Activated CD4-positive, alpha-beta T cell treated with anti-CD3 and anti-CD28 coated beads for 36 hours (primary cell): ENCODE measurements at regions of chr10 and their contacts with region 1.

Region 1: DNA sequence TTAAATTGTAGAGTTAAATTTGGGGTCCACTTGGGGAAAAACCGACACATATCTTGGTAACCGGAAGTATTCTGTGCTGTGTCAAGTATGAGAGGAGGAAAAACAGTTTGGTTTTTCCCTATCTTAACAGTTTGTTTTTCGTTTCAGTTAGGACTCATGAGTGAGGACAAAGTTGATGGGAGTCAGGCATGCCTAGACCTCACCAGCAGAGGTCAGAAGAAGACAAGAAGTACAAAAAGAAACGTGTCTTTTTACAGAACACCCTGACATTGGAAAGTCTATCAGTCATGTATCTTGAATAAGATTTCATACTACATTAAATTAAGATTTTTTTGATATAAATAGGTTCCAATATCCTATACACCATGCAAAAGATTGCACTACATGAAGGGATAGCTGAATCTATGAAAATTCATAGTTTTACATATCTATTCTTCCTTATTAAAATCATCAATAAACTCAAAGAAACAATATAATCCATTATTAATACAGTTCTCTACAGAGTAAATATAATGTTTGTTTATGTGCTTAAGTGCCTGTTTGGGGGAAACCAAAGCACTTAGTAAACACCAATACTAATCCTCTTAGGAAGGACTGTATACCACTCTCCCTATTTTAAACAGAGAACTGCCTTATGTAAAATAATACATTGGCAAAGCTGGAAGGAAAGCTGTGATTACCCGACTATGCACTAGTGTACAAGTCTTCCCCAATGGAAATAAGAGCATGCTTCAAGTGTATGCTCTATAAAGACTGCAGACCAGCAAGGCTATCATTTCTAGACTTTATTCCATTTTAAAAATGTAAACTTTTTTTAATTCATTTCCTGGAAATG is 95.6 kb downstream of the USP6NL start:
- DNase-seq: peak; percentile 65
- ATAC-seq: peak; percentile 76
- H3K4me3 Mint-ChIP-seq: no peak overlapping the region
- H3K27ac Mint-ChIP-seq: no peak overlapping the region
- H3K4me1 Mint-ChIP-seq: peaks cover 21% of the 10 kb centered on the region
- H3K27me3 Mint-ChIP-seq: peaks cover 7% of the 10 kb centered on the region

Region 2: GRCh38 chr10:11551916-11552602 is 36.2 kb after region 1 on chr10:
- CTCF ChIA-PET with region 1: interaction called, 5 read pairs
- POLR2A ChIA-PET with region 1: no interaction called
- intact Hi-C with region 1: loop called (anchors 1 to 2 kb)
- DNase-seq: no peak
- ATAC-seq: peak; percentile 90
- H3K4me3 Mint-ChIP-seq: no peak overlapping the region
- H3K27ac Mint-ChIP-seq: peak overlapping the region; percentile 72
- H3K4me1 Mint-ChIP-seq: peaks cover 38% of the 10 kb centered on the region
- H3K27me3 Mint-ChIP-seq: no peaks in the 10 kb centered on the region

Region 3: GRCh38 chr10:11611248-11612020 is 95.6 kb after region 1 on chr10 and contains the start of gene USP6NL:
- CTCF ChIA-PET with region 1: interaction called, 5 read pairs
- POLR2A ChIA-PET with region 1: no interaction called
- intact Hi-C with region 1: loop called (anchors 2 kb)
- DNase-seq: peak; percentile 71
- ATAC-seq: peak; percentile 42
- H3K4me3 Mint-ChIP-seq: peak within 1 kb of the TSS; percentile 83
- H3K27ac Mint-ChIP-seq: peak within 1 kb of the TSS; percentile 81
- H3K4me1 Mint-ChIP-seq: peaks cover 43% of the 10 kb centered on the region
- H3K27me3 Mint-ChIP-seq: peaks cover 2% of the 10 kb centered on the region
- total RNA-seq, gene USP6NL: 4.4 to 5.4 TPM

Region 4: DNA sequence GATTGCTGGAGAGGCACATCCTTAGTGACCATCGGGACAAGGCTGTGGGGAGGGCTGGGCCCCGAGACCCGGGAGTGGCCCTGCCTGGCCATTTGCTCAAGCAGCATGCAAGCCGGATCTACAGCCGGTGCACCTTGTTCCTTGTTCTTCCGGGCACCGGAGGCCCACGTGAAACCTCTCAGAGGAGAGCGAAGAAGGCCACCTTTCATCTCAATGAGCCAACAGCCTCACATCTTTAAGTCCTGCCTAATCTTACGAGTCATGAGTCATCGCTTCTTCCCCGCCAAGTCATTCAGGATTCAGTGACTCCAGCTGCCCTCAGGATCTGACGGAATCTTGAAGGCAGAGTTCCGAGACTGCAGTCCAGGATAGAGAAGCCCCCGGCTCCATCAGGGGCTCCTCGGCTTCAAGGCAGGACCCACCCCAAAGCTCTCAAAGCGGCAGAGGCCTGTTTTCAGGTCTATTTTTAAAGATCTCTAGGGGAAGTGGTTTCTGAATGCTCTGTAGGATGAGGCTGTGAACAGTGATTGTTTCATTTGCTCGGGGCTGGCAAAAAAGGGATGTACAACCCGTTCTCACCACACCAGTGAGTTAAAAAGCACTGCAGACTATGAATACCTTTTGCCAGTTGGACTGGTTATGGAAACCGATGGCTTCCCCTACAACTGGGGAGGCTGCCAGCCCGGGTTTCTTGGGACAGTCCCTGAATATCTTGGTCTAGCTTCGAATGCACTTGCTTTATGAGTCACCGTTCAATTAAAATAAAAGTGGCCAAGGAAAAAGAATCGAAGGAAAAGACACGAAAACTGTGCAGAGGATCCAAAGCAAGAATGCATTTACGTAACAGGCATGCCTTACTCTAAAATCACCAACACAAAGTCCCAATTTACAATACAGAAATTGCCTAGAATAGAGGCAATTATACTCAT is 169.2 kb after region 1 on chr10:
- CTCF ChIA-PET with region 1: no interaction called
- POLR2A ChIA-PET with region 1: no interaction called
- intact Hi-C with region 1: loop called in 1 of 2 experiments (anchors 1 kb)
- DNase-seq: peak; percentile 81
- ATAC-seq: peak; percentile 93
- H3K4me3 Mint-ChIP-seq: peak overlapping the region; percentile 72
- H3K27ac Mint-ChIP-seq: peak overlapping the region; percentile 94
- H3K4me1 Mint-ChIP-seq: peaks cover 49% of the 10 kb centered on the region
- H3K27me3 Mint-ChIP-seq: peaks cover 4% of the 10 kb centered on the region

Region 5: DNA sequence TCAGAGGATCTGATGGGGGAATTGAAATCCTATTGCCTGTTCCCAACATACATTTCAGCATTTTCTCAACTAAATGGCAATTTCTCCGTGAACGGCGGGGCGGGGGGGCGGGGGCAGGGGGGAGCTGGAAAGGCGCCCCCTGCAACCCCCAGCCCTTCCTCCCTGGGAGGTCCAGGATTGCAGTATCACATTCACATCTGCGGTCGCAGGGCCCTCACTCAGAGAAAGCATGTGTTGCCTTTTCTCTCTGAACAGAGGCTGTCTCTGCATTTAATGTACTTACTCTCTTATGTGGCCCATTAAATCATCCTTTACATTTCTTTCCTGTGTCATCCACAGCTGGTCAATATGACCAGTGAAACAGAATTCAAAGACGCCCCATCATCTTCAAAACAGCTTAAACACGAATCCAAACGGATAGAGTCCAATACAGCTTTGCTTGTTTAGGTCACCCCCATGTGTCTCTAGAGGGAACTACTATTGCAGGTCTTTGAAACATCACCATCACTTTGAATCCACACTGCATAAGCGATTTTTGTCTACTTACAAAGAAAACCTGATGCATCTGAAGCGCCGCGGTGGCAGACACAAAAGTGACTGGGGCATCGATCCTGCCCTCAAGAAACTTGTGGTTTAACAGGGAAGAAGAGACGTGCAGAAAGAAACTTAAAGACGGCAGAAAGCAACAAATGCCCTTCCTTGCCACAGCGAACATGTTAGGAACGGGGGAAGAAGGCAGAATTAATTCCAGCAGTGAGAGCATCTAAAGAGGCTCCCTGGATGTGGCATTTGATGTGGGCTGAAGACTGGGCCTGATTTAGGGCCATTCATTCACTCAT is 209.3 kb after region 1 on chr10:
- CTCF ChIA-PET with region 1: interaction called, 19 read pairs
- POLR2A ChIA-PET with region 1: no interaction called
- intact Hi-C with region 1: loop called (anchors 1 kb)
- DNase-seq: no peak
- ATAC-seq: peak; percentile 83
- H3K4me3 Mint-ChIP-seq: no peak overlapping the region
- H3K27ac Mint-ChIP-seq: no peak overlapping the region
- H3K4me1 Mint-ChIP-seq: peaks cover 5% of the 10 kb centered on the region
- H3K27me3 Mint-ChIP-seq: peaks cover 13% of the 10 kb centered on the region

Region 6: DNA sequence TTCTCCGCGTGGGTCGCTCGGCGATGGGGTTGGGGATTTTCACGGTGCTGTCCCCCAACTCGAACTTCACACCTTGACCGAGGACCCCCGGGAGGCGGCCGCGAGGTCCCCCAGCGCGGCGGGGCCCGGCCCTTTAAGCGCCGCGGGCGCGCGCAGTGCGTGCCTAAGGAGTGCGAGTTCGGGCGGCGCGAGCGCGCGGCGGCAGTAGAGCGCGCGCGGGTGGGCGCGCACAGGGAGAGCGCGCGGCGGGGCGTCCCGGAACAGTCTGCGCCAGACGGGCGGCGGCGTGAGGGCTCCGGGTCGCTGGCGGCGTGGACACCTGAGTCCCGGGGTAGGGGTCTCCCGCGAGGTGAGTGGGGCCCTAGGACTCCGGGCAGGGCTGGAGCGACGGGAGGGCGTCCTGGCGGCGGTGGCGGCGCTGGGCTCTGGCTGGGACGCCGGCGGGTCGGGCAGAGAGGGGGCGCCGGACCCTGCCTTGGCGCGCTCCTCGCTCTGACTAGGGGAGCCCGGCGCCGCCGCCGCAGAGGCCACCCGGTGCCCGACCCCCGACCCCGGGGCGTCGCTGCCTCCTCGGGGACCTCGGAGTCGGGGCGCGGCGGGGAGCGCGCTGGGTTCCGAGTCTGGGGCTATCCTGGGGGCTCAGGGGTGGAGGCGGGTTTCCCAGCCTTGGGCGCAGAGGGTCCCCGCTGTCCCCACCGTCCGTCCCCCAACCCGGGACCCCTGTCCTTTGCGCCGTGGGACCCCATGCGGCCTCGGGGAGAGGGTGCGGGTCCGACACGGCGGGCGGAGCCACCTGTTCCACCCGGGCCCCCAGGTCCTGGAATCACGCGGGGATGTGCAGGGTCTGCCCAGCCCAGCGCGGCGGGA is 307.5 kb after region 1 on chr10 and contains the start of gene PROSER2:
- CTCF ChIA-PET with region 1: no interaction called
- POLR2A ChIA-PET with region 1: no interaction called
- intact Hi-C with region 1: loop called in 1 of 2 experiments (anchors 5 kb)
- DNase-seq: peak; percentile 60
- ATAC-seq: peak; percentile 76
- H3K4me3 Mint-ChIP-seq: peak within 1 kb of the TSS; percentile 69
- H3K27ac Mint-ChIP-seq: peak within 1 kb of the TSS; percentile 70
- H3K4me1 Mint-ChIP-seq: peaks cover 7% of the 10 kb centered on the region
- H3K27me3 Mint-ChIP-seq: peaks cover 34% of the 10 kb centered on the region
- total RNA-seq, gene PROSER2: 0.78 to 0.88 TPM